ENCODE measurements at regions of chr19 and their contacts with region 1.

Region 1: DNA sequence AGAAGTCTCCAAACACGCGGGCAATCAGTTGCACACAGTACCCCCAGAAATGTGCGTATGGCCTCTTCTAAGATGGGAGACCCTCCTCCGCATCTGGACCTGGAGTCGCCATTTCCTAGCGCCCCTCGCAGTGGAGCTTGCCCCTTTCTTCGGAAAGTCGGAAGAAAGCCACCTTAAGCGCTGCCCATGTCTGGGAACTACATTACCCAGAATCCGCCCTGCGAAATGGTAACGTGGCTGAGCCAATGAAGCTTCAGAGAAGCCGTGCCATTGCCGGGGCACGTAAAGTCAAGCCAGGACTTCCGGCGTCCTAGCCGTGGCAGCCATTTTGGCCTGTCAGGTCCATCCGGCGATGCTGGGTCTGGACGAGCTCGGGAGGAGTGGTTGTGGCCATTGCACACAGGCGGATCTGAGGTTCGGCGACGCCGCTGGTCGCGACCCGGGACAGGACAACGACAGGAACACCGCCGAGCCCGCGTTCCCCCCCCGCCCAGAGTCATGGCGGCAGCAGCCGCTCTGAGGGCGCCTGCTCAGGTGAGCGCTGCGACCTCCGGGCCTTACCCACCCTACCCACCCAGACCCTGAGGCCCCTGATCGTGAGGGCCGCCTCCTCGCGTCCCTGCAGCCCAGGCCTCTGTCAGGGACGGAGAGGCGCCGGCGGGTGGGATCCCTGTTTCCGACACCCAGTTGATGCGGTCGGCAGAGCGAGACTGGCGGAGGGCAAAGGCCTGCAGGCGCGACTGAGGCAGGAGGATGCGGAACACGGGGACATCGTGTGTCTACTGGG is at the start of gene ZNF586:
- DNase-seq: peak; percentile 78 to 94
- ATAC-seq: peak; percentile 99 to 100 (median 99)
- H3K4me3 ChIP-seq: peak within 1 kb of the TSS; percentile 91
- H3K4me3 Mint-ChIP-seq: peak within 1 kb of the TSS; percentile 95
- H3K27ac ChIP-seq: peak within 1 kb of the TSS; percentile 90
- H3K27ac Mint-ChIP-seq: peak within 1 kb of the TSS; percentile 88 to 93
- H3K4me1 ChIP-seq: peaks cover 26% of the 10 kb centered on the region
- H3K4me1 Mint-ChIP-seq: peaks cover 40 to 43% of the 10 kb centered on the region in 2 donors
- H3K27me3 ChIP-seq: no peaks in the 10 kb centered on the region
- H3K27me3 Mint-ChIP-seq: no peaks in the 10 kb centered on the region
- CTCF ChIP-seq: no peak
- total RNA-seq, gene ZNF586: 24.0 to 33.3 (median 28.2) TPM

Region 2: GRCh38 chr19:57746580-57747471 is 22.7 kb before region 1 on chr19 and contains the start of gene ZNF776:
- intact Hi-C with region 1: loop called (anchors 1 kb)
- DNase-seq: peak; percentile 73 to 93
- ATAC-seq: peak; percentile 97 to 99 (median 98)
- H3K4me3 ChIP-seq: peak within 1 kb of the TSS; percentile 69
- H3K4me3 Mint-ChIP-seq: peak within 1 kb of the TSS; percentile 93
- H3K27ac ChIP-seq: peak within 1 kb of the TSS; percentile 75
- H3K27ac Mint-ChIP-seq: peak within 1 kb of the TSS; percentile 99
- H3K4me1 ChIP-seq: peaks cover 11% of the 10 kb centered on the region
- H3K4me1 Mint-ChIP-seq: peaks cover 25 to 40% of the 10 kb centered on the region in 2 donors
- H3K27me3 ChIP-seq: no peaks in the 10 kb centered on the region
- H3K27me3 Mint-ChIP-seq: no peaks in the 10 kb centered on the region
- CTCF ChIP-seq: no peak
- total RNA-seq, gene ZNF776: 10.5 to 19.2 (median 18.7) TPM

Region 3: DNA sequence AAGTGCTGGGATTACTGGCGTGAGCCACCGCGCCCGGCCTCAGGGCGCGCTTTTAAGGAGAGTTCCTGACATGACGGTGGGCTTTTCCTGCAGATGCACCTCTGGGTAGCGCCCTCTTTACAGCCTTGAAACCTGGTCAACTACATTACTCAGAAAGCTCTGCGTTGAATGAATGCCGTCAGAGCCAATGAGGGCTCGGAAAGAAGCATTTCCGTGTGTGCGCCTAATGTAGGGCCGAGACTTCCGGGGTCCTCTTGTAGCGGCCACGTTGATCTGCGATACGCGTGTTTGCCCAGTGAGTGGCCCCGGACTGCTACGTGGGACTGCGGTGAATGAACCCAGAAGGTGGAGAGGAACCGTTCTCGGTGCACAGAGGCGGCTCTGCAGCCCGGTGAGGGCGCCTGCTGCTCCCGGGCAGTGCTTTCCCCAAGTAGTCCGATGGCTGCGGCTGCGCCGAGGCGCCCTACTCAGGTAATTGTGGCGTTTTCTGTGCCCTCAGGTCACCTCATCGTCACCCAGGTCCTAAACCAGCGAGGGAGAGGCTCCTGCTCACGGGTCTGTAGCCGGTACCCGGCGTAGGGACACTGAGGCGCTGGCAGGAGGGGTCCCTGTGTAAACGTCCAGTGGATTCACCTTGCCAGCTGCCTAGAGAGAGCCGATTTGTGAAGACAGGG is 50.1 kb after region 1 on chr19:
- intact Hi-C with region 1: loop called (anchors 1 kb)
- DNase-seq: peak; percentile 74 to 93
- ATAC-seq: peak; percentile 83 to 91 (median 85)
- H3K4me3 ChIP-seq: peak overlapping the region; percentile 91
- H3K4me3 Mint-ChIP-seq: peak overlapping the region; percentile 94
- H3K27ac ChIP-seq: peak overlapping the region; percentile 81
- H3K27ac Mint-ChIP-seq: peak overlapping the region; percentile 96 to 97
- H3K4me1 ChIP-seq: peaks cover 20% of the 10 kb centered on the region
- H3K4me1 Mint-ChIP-seq: peaks cover 43 to 46% of the 10 kb centered on the region in 2 donors
- H3K27me3 ChIP-seq: no peaks in the 10 kb centered on the region
- H3K27me3 Mint-ChIP-seq: no peaks in the 10 kb centered on the region
- CTCF ChIP-seq: no peak

Region 4: DNA sequence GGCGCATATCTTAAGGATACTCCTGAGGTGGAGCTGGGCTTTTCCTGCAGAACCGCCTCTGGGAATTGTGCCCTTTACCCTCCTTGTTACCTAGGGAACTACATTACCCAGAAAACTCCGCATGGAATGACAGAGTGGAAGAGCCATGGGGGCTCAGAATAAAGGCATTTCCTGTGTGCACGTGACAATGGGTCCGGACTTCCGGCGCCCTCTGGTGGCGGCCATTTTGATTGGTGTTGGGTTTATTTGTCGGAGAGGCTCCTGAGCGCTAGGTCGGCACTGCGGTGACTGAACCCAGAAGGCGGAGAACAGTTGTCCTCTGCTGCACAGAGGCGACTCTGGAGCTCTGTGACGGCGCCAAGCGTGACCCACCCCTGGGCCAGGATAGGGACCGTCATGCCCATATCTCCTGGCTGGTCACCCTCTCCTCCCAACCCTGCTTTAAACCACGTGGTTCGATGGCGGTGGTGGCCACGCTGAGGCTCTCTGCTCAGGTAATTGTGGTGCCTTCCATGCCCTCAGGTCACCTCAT is 60.6 kb after region 1 on chr19 and contains the start of gene ZNF587B:
- intact Hi-C with region 1: no loop called
- DNase-seq: peak; percentile 28 to 49
- ATAC-seq: peak in 2 of 3 donors; percentile 62 to 64
- H3K4me3 ChIP-seq: no peak within 1 kb of the TSS
- H3K4me3 Mint-ChIP-seq: no peak within 1 kb of the TSS
- H3K27ac ChIP-seq: no peak within 1 kb of the TSS
- H3K27ac Mint-ChIP-seq: peak within 1 kb of the TSS in 1 of 2 donors; percentile 54
- H3K4me1 ChIP-seq: no peaks in the 10 kb centered on the region
- H3K4me1 Mint-ChIP-seq: peaks cover 22 to 25% of the 10 kb centered on the region in 2 donors
- H3K27me3 ChIP-seq: no peaks in the 10 kb centered on the region
- H3K27me3 Mint-ChIP-seq: no peaks in the 10 kb centered on the region
- CTCF ChIP-seq: peak; percentile 33
- total RNA-seq, gene ZNF587B: 23.4 to 25.7 (median 23.9) TPM